Upper lobe of right lung (tissue), 1 donor: ENCODE measurements at regions of chr15 and their contacts with region 1.

Region 1: DNA sequence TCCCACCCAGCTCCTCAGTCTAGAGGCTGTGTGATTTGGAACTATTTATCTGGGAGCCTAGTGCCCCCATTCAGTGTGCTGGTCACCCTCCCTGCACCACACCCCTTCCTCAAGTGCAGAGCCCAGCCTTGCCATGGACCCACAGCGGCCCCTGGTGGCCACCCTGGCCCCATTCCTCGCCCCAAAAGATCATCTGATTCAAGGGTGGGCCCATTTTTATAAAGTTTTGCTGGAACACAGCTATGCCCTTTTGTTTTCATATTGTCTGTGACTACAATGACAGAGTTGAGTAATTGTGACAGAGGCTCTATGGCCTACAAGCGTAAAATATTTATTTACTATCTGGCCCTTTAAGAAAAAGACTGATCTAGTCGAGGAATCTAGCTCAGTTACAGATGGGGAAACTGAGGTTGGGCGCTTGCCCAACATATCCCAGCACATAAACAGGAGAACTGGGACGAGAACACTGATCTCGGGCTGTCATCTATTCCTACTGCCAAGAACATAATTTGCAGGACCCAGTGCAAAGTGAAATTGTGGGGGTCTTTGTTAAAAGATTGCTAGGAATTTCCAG is 1.8 kb downstream of the FES start:
- DNase-seq: peak; percentile 91
- ATAC-seq: peak; percentile 78
- H3K4me3 ChIP-seq: peak overlapping the region; percentile 76
- H3K27ac ChIP-seq: peak overlapping the region; percentile 96
- H3K4me1 ChIP-seq: peaks cover 30% of the 10 kb centered on the region
- H3K27me3 ChIP-seq: no peaks in the 10 kb centered on the region
- CTCF ChIP-seq: peak; percentile 99

Region 2: GRCh38 chr15:90648137-90649070 is 237.7 kb before region 1 on chr15:
- intact Hi-C with region 1: loop called (anchors 5 kb)
- DNase-seq: peak; percentile 75
- ATAC-seq: peak; percentile 85
- H3K4me3 ChIP-seq: peak overlapping the region; percentile 9
- H3K27ac ChIP-seq: peak overlapping the region; percentile 66
- H3K4me1 ChIP-seq: peaks cover 17% of the 10 kb centered on the region
- H3K27me3 ChIP-seq: no peaks in the 10 kb centered on the region
- CTCF ChIP-seq: peak; percentile 88